ENCODE measurements at regions of chr16 and their contacts with region 1.

Region 1: GRCh38 chr16:3150346-3151218 is 15.8 kb downstream of the ZNF213 start:
- DNase-seq: peak; percentile 90 to 100 (median 97)
- ATAC-seq: peak; percentile 90
- H3K4me3 ChIP-seq: peak overlapping the region; percentile 73
- H3K4me3 Mint-ChIP-seq: peak overlapping the region; percentile 83 to 93 (median 90)
- H3K27ac ChIP-seq: peak overlapping the region; percentile 71
- H3K27ac Mint-ChIP-seq: peak overlapping the region; percentile 85 to 98 (median 94)
- H3K4me1 ChIP-seq: peaks cover 0 to 5% of the 10 kb centered on the region in 2 donors
- H3K4me1 Mint-ChIP-seq: peaks cover 11 to 42% (median 22%) of the 10 kb centered on the region in 7 donors
- H3K27me3 ChIP-seq: no peaks in the 10 kb centered on the region
- H3K27me3 Mint-ChIP-seq: peaks cover 0 to 25% (median 0%) of the 10 kb centered on the region in 5 donors

Region 2: DNA sequence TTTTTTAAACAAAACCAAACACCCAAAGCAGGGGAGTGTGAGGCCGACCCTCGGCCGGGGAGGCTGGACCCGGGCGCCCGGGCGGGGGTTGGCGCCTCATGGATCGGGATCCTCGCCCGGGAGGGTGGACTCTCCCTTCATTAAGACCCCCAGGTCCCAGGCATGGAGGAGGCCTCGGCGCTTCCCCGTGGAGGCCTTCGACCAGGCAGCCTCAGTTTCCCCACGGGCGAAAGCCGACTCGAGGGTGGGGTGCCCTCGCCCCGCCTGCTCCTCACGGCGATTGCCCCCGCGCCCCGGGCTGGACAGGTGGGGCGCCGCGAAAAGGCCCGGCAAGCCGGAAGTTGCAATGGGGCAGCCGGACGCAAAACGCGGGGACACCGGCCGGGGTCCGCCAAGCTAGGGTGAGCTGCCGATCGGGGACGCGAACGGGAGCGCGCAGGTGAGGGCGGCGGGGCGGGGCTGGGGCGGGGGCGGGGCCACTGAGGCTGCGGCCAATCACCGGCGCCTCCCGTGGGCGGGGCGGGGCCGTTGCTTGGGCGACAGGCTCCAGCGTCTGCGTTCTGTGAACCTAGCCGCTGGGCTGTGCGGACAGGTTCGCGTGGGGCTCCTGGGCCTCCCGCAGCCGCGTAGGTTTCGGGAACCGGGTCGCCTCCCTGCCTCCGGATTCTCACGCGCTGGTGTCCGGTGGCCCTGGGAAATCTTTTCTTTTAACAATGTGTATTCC is 44.2 kb before region 1 on chr16:
- CTCF ChIA-PET with region 1: interaction called, 3 read pairs
- POLR2A ChIA-PET with region 1: interaction called, 4 read pairs
- intact Hi-C with region 1: loop called in 1 of 2 experiments (anchors 1 kb)
- DNase-seq: peak; percentile 77 to 92 (median 85)
- ATAC-seq: peak; percentile 97
- H3K4me3 ChIP-seq: peak overlapping the region; percentile 76
- H3K4me3 Mint-ChIP-seq: peak overlapping the region; percentile 83 to 94 (median 87)
- H3K27ac ChIP-seq: peak overlapping the region; percentile 89
- H3K27ac Mint-ChIP-seq: peak overlapping the region; percentile 82 to 96 (median 92)
- H3K4me1 ChIP-seq: peaks cover 13 to 23% of the 10 kb centered on the region in 2 donors
- H3K4me1 Mint-ChIP-seq: peaks cover 26 to 45% (median 35%) of the 10 kb centered on the region in 7 donors
- H3K27me3 ChIP-seq: no peaks in the 10 kb centered on the region
- H3K27me3 Mint-ChIP-seq: peaks cover 0 to 7% (median 0%) of the 10 kb centered on the region in 5 donors

Region 3: GRCh38 chr16:3188925-3189825 is 38.6 kb after region 1 on chr16:
- CTCF ChIA-PET with region 1: no interaction called
- POLR2A ChIA-PET with region 1: interaction called, 3 read pairs
- intact Hi-C with region 1: loop called in 1 of 2 experiments (anchors 5 kb)
- DNase-seq: peak in 2 of 9 donors; percentile 32 to 53
- ATAC-seq: peak; percentile 44
- H3K4me3 ChIP-seq: peak overlapping the region; percentile 6
- H3K4me3 Mint-ChIP-seq: peak overlapping the region; percentile 64 to 86 (median 78)
- H3K27ac ChIP-seq: no peak overlapping the region
- H3K27ac Mint-ChIP-seq: peak overlapping the region in 7 of 9 donors; percentile 28 to 88 (median 72)
- H3K4me1 ChIP-seq: peaks cover 23 to 26% of the 10 kb centered on the region in 2 donors
- H3K4me1 Mint-ChIP-seq: peaks cover 31 to 49% (median 43%) of the 10 kb centered on the region in 7 donors
- H3K27me3 ChIP-seq: peaks cover 28 to 32% of the 10 kb centered on the region in 2 donors
- H3K27me3 Mint-ChIP-seq: peaks cover 65 to 74% (median 72%) of the 10 kb centered on the region in 5 donors

Region 4: DNA sequence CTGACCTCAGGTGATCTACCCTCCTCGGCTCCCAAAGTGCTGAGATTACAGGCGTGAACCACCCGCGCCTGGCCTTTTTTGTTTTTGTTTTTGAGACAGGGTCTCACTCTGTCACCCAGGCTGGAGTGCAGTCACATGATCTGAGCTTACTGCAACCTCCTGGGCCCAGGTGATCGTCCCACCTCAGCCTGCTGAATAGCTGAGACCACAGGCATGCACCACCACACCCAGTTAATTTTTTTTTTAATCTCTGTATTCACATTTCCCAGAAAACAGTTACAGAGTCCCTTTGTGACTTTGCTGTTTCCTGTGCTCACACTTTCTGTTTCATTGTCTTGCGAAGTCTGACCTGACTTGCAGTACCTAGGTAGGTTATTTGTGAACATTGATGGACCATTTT is 352.9 kb after region 1 on chr16:
- CTCF ChIA-PET with region 1: no interaction called
- POLR2A ChIA-PET with region 1: interaction called, 6 read pairs
- intact Hi-C with region 1: loop called (anchors 1 to 2 kb)
- DNase-seq: peak in 8 of 9 donors; percentile 50 to 81 (median 70)
- ATAC-seq: peak; percentile 49
- H3K4me3 ChIP-seq: peak overlapping the region; percentile 3
- H3K4me3 Mint-ChIP-seq: peak overlapping the region; percentile 76 to 94 (median 84)
- H3K27ac ChIP-seq: peak overlapping the region; percentile 92
- H3K27ac Mint-ChIP-seq: peak overlapping the region; percentile 90 to 98 (median 95)
- H3K4me1 ChIP-seq: peaks cover 40 to 47% of the 10 kb centered on the region in 2 donors
- H3K4me1 Mint-ChIP-seq: peaks cover 37 to 80% (median 67%) of the 10 kb centered on the region in 7 donors
- H3K27me3 ChIP-seq: no peaks in the 10 kb centered on the region
- H3K27me3 Mint-ChIP-seq: no peaks in the 10 kb centered on the region

Region 5: DNA sequence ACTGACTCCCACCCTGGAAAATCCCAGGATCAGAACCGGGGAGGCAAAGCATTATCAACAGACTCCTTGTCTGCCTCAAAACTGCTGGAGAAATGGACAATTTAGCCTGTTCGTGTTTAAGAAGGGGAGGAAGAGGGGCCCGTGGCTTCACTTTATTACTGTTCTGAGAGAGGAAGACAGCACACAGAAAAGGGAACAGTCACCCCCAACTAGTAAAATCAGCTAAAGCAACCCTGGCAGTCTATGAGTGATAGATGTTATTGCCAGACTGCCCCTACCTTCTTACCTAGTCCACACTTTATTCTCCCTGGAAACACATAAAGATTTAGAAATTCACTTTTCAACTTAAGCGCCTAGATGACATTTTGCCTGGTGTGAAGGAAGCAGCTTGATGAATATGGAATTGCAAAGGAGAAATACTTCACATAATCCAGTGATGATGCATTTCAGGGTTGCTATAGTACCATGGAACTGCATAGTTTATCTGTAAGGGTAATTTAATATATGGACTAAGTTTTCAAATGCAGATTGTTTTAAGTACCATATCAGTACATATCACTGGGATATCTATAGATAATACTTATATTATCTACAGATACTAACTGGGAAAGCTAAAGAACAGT is 603.6 kb after region 1 on chr16:
- CTCF ChIA-PET with region 1: no interaction called
- POLR2A ChIA-PET with region 1: no interaction called
- intact Hi-C with region 1: no loop called
- DNase-seq: no peak
- ATAC-seq: no peak
- H3K4me3 ChIP-seq: no peak overlapping the region
- H3K4me3 Mint-ChIP-seq: no peak overlapping the region
- H3K27ac ChIP-seq: no peak overlapping the region
- H3K27ac Mint-ChIP-seq: peak overlapping the region in 3 of 9 donors; percentile 18 to 69 (median 50)
- H3K4me1 ChIP-seq: no peaks in the 10 kb centered on the region
- H3K4me1 Mint-ChIP-seq: peaks cover 9 to 26% (median 21%) of the 10 kb centered on the region in 7 donors
- H3K27me3 ChIP-seq: no peaks in the 10 kb centered on the region
- H3K27me3 Mint-ChIP-seq: no peaks in the 10 kb centered on the region

Region 6: GRCh38 chr16:4802659-4803287 is 1652.2 kb after region 1 on chr16:
- CTCF ChIA-PET with region 1: no interaction called
- POLR2A ChIA-PET with region 1: no interaction called
- intact Hi-C with region 1: loop called in 1 of 2 experiments (anchors 10 kb)
- DNase-seq: peak; percentile 82 to 97 (median 93)
- ATAC-seq: peak; percentile 93
- H3K4me3 ChIP-seq: peak overlapping the region; percentile 79
- H3K4me3 Mint-ChIP-seq: peak overlapping the region; percentile 81 to 86 (median 86)
- H3K27ac ChIP-seq: peak overlapping the region; percentile 60
- H3K27ac Mint-ChIP-seq: peak overlapping the region in 8 of 9 donors; percentile 36 to 84 (median 74)
- H3K4me1 ChIP-seq: peaks cover 10 to 18% of the 10 kb centered on the region in 2 donors
- H3K4me1 Mint-ChIP-seq: peaks cover 7 to 19% (median 12%) of the 10 kb centered on the region in 7 donors
- H3K27me3 ChIP-seq: no peaks in the 10 kb centered on the region
- H3K27me3 Mint-ChIP-seq: no peaks in the 10 kb centered on the region

Measured in naive thymus-derived CD4-positive, alpha-beta T cell (primary cell).